ENCODE measurements at regions of chr17 and their contacts with region 1.

Region 1: GRCh38 chr17:46159686-46160085 is 33.5 kb downstream of the KANSL1 start:
- DNase-seq: no peak
- ATAC-seq: peak in 1 of 4 donors; percentile 27
- H3K4me3 ChIP-seq: no peak overlapping the region
- H3K27ac ChIP-seq: no peak overlapping the region
- H3K4me1 ChIP-seq: peaks cover 29 to 63% (median 63%) of the 10 kb centered on the region in 3 donors
- H3K27me3 ChIP-seq: no peaks in the 10 kb centered on the region
- CTCF ChIP-seq: no peak

Region 2: DNA sequence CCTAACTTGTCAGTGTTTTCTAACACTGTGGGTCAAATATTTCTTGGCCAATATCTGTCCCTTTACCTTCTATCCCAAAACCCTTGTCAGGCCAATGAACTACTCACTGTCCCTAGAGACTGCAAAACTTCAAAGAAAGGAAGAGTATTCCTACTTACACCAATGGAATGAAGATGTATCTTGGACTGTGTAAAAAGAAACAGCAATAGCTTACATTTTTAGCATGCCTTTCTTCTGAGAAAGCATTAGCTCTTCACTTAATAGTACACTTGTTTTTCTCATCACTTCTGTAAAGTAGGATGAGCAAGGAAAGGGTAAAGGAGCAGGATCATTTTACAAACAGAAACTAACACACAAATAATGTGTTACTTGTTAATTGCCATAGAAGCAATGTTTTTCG is 86.7 kb before region 1 on chr17:
- intact Hi-C with region 1: no loop called
- DNase-seq: no peak
- ATAC-seq: peak in 1 of 4 donors; percentile 42
- H3K4me3 ChIP-seq: no peak overlapping the region
- H3K27ac ChIP-seq: no peak overlapping the region
- H3K4me1 ChIP-seq: peaks cover 0 to 14% (median 8%) of the 10 kb centered on the region in 3 donors
- H3K27me3 ChIP-seq: no peaks in the 10 kb centered on the region
- CTCF ChIP-seq: no peak

Region 3: DNA sequence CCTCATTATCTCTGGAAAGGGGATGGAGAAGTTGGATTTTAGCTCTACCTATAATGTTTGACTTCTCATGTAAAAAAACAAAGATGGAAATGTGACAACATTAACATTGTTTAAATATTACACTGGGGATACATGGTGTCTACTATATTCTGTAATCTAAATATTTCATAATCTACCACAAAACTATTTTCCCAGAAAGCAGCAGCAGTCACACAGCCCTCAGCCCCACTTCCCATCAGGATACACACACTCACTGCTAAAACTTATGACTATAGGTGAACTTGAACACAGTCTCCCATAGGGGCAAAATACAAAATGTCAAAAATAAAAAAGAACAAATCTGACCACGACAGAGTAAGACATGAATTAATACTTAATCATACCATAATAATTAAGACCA is 62.2 kb before region 1 on chr17:
- intact Hi-C with region 1: no loop called
- DNase-seq: no peak
- ATAC-seq: no peak
- H3K4me3 ChIP-seq: no peak overlapping the region
- H3K27ac ChIP-seq: no peak overlapping the region
- H3K4me1 ChIP-seq: peaks cover 9 to 32% (median 21%) of the 10 kb centered on the region in 3 donors
- H3K27me3 ChIP-seq: no peaks in the 10 kb centered on the region
- CTCF ChIP-seq: no peak

Region 4: GRCh38 chr17:46115699-46116098 is 44.0 kb before region 1 on chr17:
- intact Hi-C with region 1: loop called in 2 of 3 experiments (anchors 10 kb)
- DNase-seq: no peak
- ATAC-seq: no peak
- H3K4me3 ChIP-seq: no peak overlapping the region
- H3K27ac ChIP-seq: no peak overlapping the region
- H3K4me1 ChIP-seq: peaks cover 16 to 44% (median 42%) of the 10 kb centered on the region in 3 donors
- H3K27me3 ChIP-seq: no peaks in the 10 kb centered on the region
- CTCF ChIP-seq: no peak